ENCODE measurements at regions of chr3 and their contacts with region 1.

Region 1: DNA sequence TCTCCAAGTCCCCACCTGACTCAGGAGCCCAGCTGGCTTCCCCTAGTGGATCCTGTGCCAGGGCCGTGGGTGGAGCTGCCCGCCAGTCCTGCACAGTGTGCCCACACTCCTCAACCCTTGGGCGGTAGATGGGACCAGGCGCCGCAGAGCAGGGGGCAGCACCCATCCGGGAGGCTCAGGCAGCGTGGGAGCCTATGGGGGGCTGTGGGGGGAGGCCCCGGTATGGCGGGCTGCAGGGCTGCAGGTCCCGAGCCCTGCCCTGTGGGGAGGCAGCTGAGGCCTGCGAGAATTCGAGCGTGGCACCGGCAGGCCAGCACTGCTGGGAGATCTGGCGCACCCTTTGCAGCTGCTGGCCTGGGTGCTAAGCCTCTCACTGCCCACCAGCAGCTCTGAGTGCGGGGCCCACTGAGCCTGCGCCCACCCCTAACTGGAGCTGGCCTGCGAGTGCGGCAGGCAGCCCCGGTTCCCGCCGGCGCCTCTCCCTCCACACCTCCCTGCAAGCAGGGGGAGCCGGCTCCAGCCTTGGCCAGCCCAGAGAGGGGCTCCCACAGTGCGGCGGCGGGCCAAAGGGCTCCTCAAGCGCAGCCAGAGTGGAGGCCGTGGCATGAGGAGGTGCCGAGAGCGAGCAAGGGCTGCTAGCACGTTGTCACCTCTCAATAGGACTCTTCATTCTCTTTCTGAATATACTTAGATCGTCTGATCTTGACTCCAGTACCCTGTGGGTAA is 64.0 kb downstream of the TMEM212 start:
- DNase-seq: no peak
- H3K4me3 ChIP-seq: no peak overlapping the region
- H3K27ac ChIP-seq: no peak overlapping the region
- H3K4me1 ChIP-seq: no peaks in the 10 kb centered on the region
- H3K27me3 ChIP-seq: no peaks in the 10 kb centered on the region
- CTCF ChIP-seq: no peak
- EP300 ChIP-seq: no peak
- POLR2A ChIP-seq: no peak

Region 2: DNA sequence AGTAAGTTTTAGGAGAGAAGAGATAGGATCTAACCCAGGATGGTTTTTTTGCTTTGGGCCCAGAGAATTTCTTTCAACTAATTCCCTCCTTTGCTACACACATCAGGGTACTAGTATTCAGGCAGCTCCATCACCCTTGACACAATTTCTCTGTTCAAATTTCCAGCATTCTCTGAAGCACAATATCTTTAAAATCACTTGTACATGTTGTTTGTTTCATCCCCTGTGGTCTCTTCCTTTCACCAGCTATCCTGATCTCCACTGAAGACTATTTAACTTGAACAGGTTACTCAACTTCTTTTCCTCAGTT is 99.9 kb after region 1 on chr3:
- in situ Hi-C with region 1: no loop called
- intact Hi-C with region 1: loop called (anchors 2 kb)
- DNase-seq: no peak
- H3K4me3 ChIP-seq: no peak overlapping the region
- H3K27ac ChIP-seq: no peak overlapping the region
- H3K4me1 ChIP-seq: peaks cover 0 to 6% (median 3%) of the 10 kb centered on the region in 4 donors
- H3K27me3 ChIP-seq: no peaks in the 10 kb centered on the region
- CTCF ChIP-seq: no peak
- EP300 ChIP-seq: no peak
- POLR2A ChIP-seq: no peak